ENCODE measurements at regions of chr6 and their contacts with region 1.

Region 1: DNA sequence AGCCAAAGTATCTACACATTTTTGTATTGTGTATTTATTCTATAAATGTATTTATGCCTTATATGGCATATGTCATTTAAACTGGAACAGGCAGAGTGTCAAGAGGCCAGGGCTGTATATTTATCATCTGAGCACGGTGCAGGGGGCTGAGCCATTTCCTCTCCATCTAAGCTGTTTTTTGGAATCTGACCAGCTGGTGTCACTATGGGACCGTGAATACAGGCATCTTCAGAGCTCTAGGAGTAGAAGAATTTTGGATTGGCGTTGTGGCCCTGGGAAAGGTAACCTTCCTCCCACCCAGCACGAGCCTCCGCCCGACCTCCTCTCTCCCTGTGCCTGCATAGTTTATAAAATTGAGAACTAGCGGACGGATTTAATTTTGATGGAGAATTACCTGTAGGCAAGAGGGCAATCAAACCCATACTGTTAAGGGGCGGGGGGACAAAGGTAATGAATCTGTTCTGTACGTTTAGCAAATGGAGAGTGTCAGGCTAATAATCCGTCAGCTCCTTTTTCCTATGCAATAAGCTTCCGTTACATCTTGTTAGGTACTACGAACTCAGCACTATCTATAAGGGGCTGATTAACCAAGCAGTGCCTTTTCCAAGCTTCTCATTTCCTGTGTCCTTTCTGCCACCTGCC is 29.0 kb upstream of the EEF1E1 start:
- DNase-seq: peak; percentile 37
- CTCF ChIP-seq: peak; percentile 59

Region 2: GRCh38 chr6:8114956-8115355 is 16.4 kb before region 1 on chr6:
- CTCF ChIA-PET with region 1: interaction called, 10 read pairs
- POLR2A ChIA-PET with region 1: no interaction called
- DNase-seq: no peak
- CTCF ChIP-seq: no peak

Region 3: DNA sequence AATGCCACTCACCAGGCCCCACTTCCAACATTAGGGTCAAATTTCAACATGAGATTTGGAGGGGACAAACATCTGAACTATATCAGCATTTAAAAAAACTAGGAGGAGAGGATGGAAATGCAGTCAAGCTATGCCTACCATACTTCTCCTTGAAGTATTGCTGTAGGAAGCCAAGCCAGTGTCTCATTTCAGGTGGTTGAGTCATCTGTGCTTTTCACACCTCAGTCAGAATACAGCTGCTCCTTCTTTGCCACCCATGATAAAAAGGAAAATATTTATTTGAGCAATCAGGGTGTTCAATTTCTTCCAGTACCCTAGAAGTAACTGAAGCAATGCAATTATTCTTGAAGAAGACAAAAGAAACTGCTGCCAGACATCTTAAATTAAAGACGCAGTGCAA is 18.0 kb after region 1 on chr6:
- CTCF ChIA-PET with region 1: interaction called, 12 read pairs
- POLR2A ChIA-PET with region 1: no interaction called
- DNase-seq: no peak
- CTCF ChIP-seq: no peak

Region 4: DNA sequence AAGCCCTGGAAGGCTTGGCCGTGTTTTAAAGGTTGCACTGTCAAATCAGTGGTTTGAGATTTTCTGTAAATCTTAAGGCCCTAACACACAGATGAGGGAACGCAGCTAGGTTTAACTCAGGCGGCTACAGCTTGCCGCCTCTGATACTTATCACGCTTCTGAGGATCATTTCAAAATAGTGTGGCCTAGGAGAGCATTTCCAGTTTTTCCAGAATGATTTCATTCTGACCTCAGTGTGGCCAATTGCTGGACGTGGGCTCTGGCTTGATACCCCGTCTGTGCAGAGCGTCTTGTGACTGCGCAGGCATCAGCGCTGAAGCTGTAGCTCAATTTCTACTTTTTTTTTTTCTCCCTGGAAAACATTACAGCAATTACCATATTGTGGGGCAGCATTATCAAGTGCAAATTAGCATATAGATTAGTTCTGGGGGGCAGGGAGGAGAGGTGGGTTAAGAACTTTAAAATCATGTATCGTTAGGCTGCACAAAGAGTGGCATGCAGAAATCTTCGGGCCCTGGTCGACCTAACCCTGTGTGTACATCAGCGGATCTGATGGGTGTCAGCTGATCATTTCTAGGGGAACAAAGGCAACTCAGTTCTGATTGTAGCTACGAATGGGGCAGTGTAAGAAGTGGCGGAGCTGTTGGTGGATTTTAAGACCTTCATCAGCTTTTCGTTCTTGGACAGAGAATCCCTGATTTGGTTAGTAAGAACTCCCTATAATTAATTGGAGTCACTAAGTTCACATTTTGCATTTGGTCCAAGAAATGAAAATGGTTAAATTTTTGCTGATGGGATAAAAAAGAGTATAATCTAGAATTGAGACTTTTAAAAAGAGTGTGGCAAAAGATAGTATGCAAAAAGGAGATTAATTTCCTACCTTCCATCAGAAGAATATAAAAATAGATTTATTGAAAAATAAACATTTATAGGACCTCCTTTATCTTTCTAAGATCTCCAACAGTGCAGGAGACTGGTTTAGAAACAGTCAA is 76.1 kb after region 1 on chr6:
- CTCF ChIA-PET with region 1: interaction called, 10 read pairs
- POLR2A ChIA-PET with region 1: no interaction called
- DNase-seq: no peak
- CTCF ChIP-seq: no peak

Region 5: DNA sequence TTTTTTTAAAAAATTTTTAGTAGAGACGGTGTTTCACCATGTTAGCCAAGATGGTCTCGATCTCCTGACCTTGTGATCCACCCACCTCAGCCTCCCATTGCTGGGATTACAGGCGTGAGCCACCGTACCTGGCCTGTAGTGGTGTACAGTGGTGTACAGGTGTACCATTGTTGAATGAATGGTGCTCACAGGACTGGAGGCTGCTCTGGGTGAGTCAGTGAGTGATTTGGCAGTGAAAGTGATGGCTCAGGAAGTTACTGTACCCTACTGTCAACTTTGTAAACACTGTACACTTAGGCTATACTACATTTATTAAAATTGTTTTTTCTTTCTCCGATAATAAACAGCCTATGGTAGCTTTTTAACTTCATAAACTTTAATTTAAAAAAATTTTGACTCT is 93.7 kb after region 1 on chr6:
- CTCF ChIA-PET with region 1: interaction called, 181 read pairs
- POLR2A ChIA-PET with region 1: no interaction called
- DNase-seq: no peak
- CTCF ChIP-seq: no peak

Measured in GM10248 (cell line).